ENCODE measurements at regions of chr6 and their contacts with region 1.

Region 1: GRCh38 chr6:44237813-44238433 is 9.0 kb upstream of the HSP90AB1 start:
- DNase-seq: no peak
- H3K4me3 ChIP-seq: peak overlapping the region; percentile 70
- H3K27ac ChIP-seq: peak overlapping the region; percentile 81
- H3K27me3 ChIP-seq: no peaks in the 10 kb centered on the region
- CTCF ChIP-seq: peak; percentile 88

Region 2: GRCh38 chr6:44096612-44097011 is 141.3 kb before region 1 on chr6:
- CTCF ChIA-PET with region 1: interaction called, 12 read pairs
- POLR2A ChIA-PET with region 1: no interaction called
- DNase-seq: no peak
- H3K4me3 ChIP-seq: no peak overlapping the region
- H3K27ac ChIP-seq: no peak overlapping the region
- H3K27me3 ChIP-seq: no peaks in the 10 kb centered on the region
- CTCF ChIP-seq: peak; percentile 78

Region 3: GRCh38 chr6:44156494-44157151 is 81.3 kb before region 1 on chr6:
- CTCF ChIA-PET with region 1: interaction called, 12 read pairs
- POLR2A ChIA-PET with region 1: no interaction called
- DNase-seq: no peak
- H3K4me3 ChIP-seq: no peak overlapping the region
- H3K27ac ChIP-seq: no peak overlapping the region
- H3K27me3 ChIP-seq: no peaks in the 10 kb centered on the region
- CTCF ChIP-seq: no peak

Region 4: DNA sequence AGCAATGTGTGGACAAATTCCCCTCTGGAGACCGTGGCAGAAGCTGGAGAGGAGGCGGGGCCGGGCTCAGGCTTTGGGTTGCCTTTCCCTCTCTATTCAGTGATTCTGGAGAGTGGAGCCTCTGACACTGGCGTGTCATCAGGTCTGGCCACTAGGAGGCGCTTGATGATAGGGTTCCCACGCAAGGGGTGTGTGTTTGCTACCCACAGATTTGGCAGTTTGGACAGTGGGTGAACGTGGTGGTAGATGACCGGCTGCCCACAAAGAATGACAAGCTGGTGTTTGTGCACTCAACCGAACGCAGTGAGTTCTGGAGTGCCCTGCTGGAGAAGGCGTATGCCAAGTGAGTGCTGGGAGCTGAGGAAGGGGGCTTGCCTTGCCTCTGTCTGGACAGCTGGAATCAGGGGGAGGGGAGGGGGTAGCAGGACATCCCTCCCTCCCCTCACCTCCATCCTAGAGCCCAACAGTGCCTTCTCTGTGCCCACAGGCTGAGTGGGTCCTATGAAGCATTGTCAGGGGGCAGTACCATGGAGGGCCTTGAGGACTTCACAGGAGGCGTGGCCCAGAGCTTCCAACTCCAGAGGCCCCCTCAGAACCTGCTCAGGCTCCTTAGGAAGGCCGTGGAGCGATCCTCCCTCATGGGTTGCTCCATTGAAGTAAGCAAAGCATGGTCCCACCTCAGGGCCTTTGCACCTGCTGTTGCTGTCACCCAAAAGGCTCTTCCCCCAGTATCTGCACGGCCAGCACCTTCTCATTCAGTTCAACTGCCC is 65.0 kb before region 1 on chr6:
- CTCF ChIA-PET with region 1: interaction called, 30 read pairs
- POLR2A ChIA-PET with region 1: no interaction called
- DNase-seq: peak; percentile 27
- H3K4me3 ChIP-seq: no peak overlapping the region
- H3K27ac ChIP-seq: no peak overlapping the region
- H3K27me3 ChIP-seq: peaks cover 19% of the 10 kb centered on the region
- CTCF ChIP-seq: peak; percentile 89

Region 5: GRCh38 chr6:44192428-44193041 is 45.4 kb before region 1 on chr6:
- CTCF ChIA-PET with region 1: interaction called, 10 read pairs
- POLR2A ChIA-PET with region 1: no interaction called
- DNase-seq: no peak
- H3K4me3 ChIP-seq: no peak overlapping the region
- H3K27ac ChIP-seq: no peak overlapping the region
- H3K27me3 ChIP-seq: peaks cover 9% of the 10 kb centered on the region
- CTCF ChIP-seq: no peak

Region 6: DNA sequence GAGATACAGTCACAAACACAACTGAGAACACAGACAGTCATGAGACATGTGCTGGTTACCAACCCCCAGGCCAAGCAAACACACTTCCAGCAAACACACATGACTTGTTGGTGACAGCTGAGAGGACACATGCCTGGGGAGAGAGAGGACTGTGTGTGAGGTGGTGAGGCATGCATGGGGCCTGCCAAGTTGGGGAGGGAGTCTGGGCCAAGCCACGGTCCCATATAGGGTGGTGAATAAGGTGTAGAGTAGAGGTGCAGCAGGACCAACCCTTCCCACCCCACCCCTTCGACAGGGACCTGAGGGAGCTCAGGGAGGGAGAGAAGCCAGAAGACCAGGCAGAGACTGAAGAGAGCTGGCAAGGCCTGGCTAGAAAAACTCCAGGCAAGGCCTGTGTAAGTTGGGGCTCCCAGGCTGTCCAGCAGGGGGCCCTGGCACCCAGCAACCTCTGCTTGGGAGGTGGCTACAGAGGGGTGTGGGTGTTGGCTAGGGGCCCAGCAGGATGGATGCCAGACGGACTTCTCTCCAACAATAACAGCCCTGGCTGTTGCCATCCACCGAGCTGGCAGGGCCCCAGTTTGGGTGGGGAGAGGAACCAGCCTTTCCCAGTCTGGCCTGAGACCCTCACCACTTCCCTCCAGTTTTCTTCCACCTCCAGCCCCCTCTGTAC is 16.5 kb before region 1 on chr6:
- CTCF ChIA-PET with region 1: interaction called, 83 read pairs
- POLR2A ChIA-PET with region 1: interaction called, 3 read pairs
- DNase-seq: no peak
- H3K4me3 ChIP-seq: no peak overlapping the region
- H3K27ac ChIP-seq: no peak overlapping the region
- H3K27me3 ChIP-seq: no peaks in the 10 kb centered on the region
- CTCF ChIP-seq: peak; percentile 71

Region 7: GRCh38 chr6:44275749-44276648 is 38.1 kb after region 1 on chr6:
- CTCF ChIA-PET with region 1: no interaction called
- POLR2A ChIA-PET with region 1: no interaction called
- DNase-seq: no peak
- H3K4me3 ChIP-seq: 0 out of 2 replicates have a peak overlapping the region, but pooled peaks have one; percentile 10
- H3K27ac ChIP-seq: no peak overlapping the region
- H3K27me3 ChIP-seq: peaks cover 76% of the 10 kb centered on the region
- CTCF ChIP-seq: no peak

Region 8: DNA sequence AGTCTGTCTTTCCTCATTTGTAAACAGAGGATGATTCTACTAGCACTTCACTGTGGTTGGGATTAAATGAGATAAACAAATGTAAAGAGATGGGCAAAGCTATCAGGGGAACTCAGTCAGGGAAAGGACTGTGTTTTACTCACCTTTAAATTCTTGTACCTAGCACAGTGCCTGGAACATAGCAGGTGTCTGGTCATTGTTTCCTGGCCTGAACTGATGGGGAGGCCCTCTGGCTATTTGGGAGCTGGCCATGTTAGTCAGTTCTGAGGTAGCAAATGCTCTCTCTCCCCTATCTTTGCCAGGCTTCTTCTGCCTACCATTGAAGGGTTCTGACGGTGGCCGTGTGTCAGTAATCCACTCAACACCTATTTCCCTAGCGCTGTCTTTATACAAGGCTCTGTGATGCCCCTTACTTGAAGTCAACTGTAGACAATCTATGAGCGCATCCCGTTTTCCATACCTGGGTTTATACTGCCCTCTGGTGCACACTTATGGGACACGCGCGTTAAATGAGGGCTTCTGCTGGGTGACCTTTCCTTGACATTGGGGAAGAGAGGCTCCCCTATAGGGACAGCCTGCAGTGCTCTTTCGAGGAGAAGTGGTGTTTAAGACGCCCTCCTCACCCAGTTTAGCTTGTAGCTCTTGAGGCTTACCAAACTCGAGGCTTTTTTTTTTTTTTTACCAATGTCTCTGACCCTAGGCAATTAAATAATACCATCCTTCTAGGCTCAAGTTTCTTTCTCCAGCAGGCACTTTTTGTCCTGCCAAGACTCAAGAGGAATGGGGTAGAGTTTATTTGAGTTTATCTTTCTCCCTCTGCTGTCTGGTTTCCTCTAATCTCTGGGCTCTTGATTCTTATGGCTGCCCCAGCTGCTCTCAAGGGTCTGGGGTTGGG is 100.6 kb after region 1 on chr6:
- CTCF ChIA-PET with region 1: interaction called, 14 read pairs
- POLR2A ChIA-PET with region 1: no interaction called
- DNase-seq: peak; percentile 20
- H3K4me3 ChIP-seq: no peak overlapping the region
- H3K27ac ChIP-seq: no peak overlapping the region
- H3K27me3 ChIP-seq: peaks cover 54% of the 10 kb centered on the region
- CTCF ChIP-seq: peak; percentile 81